Panc1 (cell line): ENCODE measurements at regions of chr11 and their contacts with region 1.

Region 1: DNA sequence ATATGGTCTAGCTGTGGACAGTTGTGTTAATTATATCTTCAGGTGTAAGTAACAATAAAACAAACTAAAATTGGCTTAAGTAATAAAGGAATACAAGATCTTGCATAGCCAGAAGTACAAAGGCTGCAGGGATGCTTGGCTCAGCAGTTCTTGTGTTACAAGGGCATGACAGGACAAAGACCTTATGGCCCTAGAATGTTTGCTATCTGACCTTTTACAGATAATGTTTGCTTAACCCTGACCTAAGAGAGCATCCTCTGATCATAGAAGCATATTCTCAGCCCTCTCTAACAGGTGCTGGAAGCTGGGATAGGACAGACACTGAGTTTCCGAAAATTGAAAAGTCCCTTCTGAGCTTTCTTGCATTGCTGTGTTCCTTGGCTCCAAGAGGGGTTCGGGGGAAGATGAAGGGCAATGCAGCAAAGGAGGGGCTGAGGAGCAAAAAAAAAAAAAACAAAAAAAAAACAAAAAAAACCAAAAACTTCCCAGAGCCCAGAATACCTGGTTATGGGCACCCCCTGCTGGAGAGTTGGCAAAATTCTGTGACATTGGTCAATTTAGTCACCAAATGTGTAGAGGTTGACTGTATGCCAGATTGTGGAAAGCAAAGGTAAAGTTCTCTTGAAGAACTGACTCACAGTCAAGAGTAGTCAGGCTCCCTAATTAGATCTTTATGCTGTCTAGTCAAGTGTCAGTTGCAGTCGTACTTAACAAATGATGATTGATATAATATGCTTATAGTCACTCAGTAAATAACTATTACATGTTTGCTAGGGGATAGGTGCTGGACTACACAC is 10.4 kb upstream of the HIKESHI start:
- DNase-seq: peak; percentile 48
- ATAC-seq: peak; percentile 71
- H3K4me3 ChIP-seq: no peak overlapping the region
- H3K27ac ChIP-seq: no peak overlapping the region
- H3K4me1 ChIP-seq: no peaks in the 10 kb centered on the region
- H3K27me3 ChIP-seq: no peaks in the 10 kb centered on the region
- CTCF ChIP-seq: peak; percentile 91

Region 2: GRCh38 chr11:85854557-85855340 is 436.9 kb before region 1 on chr11:
- CTCF ChIA-PET with region 1: interaction called, 6 read pairs
- POLR2A ChIA-PET with region 1: no interaction called
- in situ Hi-C with region 1: no loop called
- intact Hi-C with region 1: loop called (anchors 5 kb)
- DNase-seq: peak; percentile 72
- ATAC-seq: peak; percentile 97
- H3K4me3 ChIP-seq: peak overlapping the region; percentile 67 to 74
- H3K27ac ChIP-seq: peak overlapping the region; percentile 99
- H3K4me1 ChIP-seq: peaks cover 8% of the 10 kb centered on the region
- H3K27me3 ChIP-seq: no peaks in the 10 kb centered on the region
- CTCF ChIP-seq: peak; percentile 98

Region 3: DNA sequence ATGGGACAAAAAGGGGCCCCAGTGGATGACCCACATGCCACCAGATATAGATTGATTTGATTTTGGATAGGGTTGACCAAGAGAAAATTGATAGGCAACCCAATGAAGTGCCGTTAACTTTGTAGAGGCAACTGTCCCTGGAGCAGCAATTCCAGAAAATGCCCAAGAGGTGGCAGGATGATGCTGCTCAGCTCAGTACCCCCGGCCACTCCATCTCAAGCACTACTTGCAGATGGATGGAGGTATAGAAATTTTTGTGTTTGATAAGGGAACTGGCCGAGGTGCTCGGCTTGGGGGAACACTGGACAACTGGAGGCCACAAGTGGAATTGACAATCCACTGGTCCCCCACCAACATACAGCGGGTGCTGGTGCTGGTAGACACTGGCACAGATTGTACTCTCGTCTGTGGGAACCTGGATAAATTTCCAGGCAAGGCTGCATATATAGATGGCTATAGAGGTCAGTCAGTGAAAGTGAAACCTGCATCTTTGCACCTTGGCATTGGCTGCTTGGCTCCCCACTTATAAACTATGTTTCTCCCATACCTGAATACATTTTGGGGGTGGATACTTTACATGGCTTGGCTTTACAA is 350.2 kb before region 1 on chr11:
- CTCF ChIA-PET with region 1: no interaction called
- POLR2A ChIA-PET with region 1: no interaction called
- in situ Hi-C with region 1: no loop called
- intact Hi-C with region 1: loop called (anchors 10 kb)
- DNase-seq: no peak
- ATAC-seq: peak; percentile 79
- H3K4me3 ChIP-seq: no peak overlapping the region
- H3K27ac ChIP-seq: no peak overlapping the region
- H3K4me1 ChIP-seq: no peaks in the 10 kb centered on the region
- H3K27me3 ChIP-seq: no peaks in the 10 kb centered on the region
- CTCF ChIP-seq: peak; percentile 73

Region 4: DNA sequence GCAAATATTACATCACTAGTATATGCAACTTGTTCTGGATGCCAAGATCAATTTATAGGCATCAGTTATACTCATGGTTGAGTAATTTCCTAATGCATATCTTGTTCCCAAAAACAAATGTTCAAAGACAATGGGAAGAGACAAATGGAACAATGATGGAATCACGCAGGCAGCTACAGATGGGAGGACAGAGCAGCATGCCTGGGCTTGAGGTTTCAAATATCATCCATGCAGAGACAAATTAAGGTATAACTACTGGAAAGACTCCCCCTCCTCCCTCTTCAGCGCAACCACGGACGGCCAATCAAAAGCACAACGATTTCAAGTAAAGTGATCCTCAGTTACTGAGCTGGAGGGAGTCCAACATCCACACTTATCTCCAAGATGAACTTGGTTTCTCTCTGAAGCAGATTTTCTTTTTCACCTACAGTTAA is 329.7 kb before region 1 on chr11:
- CTCF ChIA-PET with region 1: interaction called, 11 read pairs
- POLR2A ChIA-PET with region 1: no interaction called
- in situ Hi-C with region 1: no loop called
- intact Hi-C with region 1: no loop called
- DNase-seq: no peak
- ATAC-seq: no peak
- H3K4me3 ChIP-seq: no peak overlapping the region
- H3K27ac ChIP-seq: no peak overlapping the region
- H3K4me1 ChIP-seq: no peaks in the 10 kb centered on the region
- H3K27me3 ChIP-seq: no peaks in the 10 kb centered on the region
- CTCF ChIP-seq: no peak

Region 5: GRCh38 chr11:86302100-86302793 is 10.6 kb after region 1 on chr11 and contains the start of gene HIKESHI:
- CTCF ChIA-PET with region 1: no interaction called
- POLR2A ChIA-PET with region 1: no interaction called
- in situ Hi-C with region 1: no loop called
- intact Hi-C with region 1: no loop called
- DNase-seq: peak; percentile 93
- ATAC-seq: peak; percentile 100
- H3K4me3 ChIP-seq: peak within 1 kb of the TSS; percentile 91 to 98
- H3K27ac ChIP-seq: peak within 1 kb of the TSS; percentile 98
- H3K4me1 ChIP-seq: peaks cover 9% of the 10 kb centered on the region; the same call in 1 of the 2 replicates
- H3K27me3 ChIP-seq: no peaks in the 10 kb centered on the region
- CTCF ChIP-seq: no peak
- total RNA-seq, gene HIKESHI: 61.3 TPM

Region 6: GRCh38 chr11:87037450-87038234 is 746.0 kb after region 1 on chr11 and contains the start of gene TMEM135:
- CTCF ChIA-PET with region 1: no interaction called
- POLR2A ChIA-PET with region 1: interaction called, 12 read pairs
- in situ Hi-C with region 1: no loop called
- intact Hi-C with region 1: no loop called
- DNase-seq: peak; percentile 88
- ATAC-seq: peak; percentile 98
- H3K4me3 ChIP-seq: peak within 1 kb of the TSS; percentile 87 to 89
- H3K27ac ChIP-seq: peak within 1 kb of the TSS; percentile 94
- H3K4me1 ChIP-seq: peaks cover 32% of the 10 kb centered on the region
- H3K27me3 ChIP-seq: no peaks in the 10 kb centered on the region
- CTCF ChIP-seq: no peak
- total RNA-seq, gene TMEM135: 65.5 TPM